ENCODE measurements at regions of chr17 and their contacts with region 1.

Region 1: GRCh38 chr17:2029911-2030778 is at the start of gene DPH1:
- DNase-seq: peak; percentile 97
- total RNA-seq, gene DPH1: 26.5 to 27.9 TPM

Region 2: DNA sequence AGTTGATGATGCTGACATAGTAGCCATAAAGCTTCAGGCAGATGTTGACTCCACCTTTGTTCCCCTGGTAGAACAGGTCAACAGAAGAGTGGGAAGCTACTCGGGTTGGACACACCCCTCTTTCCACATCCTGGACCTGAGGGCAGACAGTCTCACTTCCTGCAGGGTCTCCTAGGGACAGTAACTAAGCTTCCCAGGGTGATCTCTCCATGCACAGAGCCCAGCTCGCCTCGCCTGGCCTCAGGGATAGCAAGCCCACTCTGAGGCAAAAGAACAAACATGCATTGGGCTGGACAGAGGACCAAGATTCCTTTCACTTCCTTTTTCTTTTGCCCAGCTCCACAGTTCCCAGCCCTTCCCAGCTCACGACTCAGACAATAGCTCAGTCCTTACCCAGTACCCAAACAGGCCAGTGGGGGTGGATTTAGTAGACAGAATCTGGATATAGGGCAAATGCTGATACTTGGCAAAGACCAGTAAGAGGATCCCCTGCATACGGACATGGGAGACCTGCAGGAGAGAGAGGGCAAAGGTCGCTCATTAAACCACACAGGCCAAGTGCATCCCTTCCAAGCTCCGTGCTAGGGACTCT is 520.8 kb before region 1 on chr17:
- intact Hi-C with region 1: no loop called
- DNase-seq: no peak

Region 3: DNA sequence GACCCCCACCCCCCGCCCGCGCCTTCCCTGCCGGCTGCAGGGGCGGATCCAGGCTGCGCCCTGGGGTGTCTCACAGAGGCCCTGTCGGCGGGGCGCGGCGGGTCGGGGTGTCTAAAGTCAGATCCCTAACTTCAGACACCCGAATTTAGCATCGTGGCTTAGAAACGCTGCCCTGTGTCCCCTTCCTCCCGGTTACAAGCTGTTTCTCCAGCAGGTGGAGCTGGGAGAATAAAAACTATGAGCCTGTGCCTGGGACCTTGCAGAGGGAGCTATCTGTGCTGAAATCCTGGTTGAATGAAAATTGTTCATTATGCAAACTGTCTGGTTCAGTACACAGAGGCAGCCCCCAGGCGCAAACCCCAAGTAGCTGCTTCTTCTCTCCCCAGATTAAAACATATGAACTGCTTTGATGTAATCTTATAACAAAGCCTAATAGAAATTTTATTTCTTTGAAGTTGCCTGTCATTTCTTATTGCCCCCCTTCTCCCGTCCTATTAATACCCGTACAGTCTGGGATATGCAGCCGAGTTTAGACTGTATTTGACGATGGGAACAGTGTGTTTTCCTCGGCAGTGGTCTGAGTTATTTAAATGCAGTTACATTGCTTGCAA is 121.3 kb before region 1 on chr17:
- intact Hi-C with region 1: loop called (anchors 2 to 5 kb)
- DNase-seq: peak; percentile 76

Region 4: DNA sequence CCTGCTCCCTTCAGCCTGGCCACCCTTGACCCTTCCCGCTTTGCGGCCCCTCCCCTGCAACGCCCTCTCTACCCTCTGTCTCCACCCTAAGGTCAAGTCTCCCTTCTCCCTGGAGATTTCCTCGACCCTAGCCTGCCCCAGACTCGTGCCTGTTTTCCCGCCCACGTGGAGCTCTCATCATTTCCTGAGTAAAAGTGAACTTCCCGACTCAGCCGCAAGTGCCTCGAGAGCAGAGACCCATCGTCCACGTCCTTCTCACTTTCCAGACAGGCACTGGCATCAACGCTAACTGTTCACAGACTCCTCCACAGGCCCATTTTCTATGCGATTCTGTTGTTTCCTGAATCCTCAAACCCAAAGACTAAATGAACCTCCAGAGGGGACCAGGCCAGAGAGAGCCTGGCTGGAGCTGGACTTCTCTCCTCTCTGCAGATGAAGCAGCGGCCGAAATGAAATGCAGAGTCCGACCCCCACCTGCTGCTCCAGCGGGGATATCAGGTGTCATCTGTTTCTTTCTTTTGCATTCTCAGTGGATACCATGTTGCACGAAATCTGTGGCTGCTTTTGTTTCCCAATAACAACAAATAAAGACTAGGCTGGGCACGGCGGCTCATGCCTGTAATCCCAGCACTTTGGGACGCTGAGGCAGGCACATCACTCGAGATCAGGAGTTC is 57.5 kb before region 1 on chr17:
- intact Hi-C with region 1: loop called in 1 of 2 experiments (anchors 10 kb)
- DNase-seq: no peak